CD8-positive, alpha-beta T cell (primary cell): ENCODE measurements at regions of chr3 and their contacts with region 1.

Region 1: GRCh38 chr3:152183473-152183872 is 85.3 kb upstream of the MBNL1 start:
- DNase-seq: peak in 8 of 9 experiments; percentile 34 to 83 (median 62)
- ATAC-seq: peak; percentile 94
- H3K4me3 ChIP-seq: no peak overlapping the region
- H3K4me3 Mint-ChIP-seq: peak overlapping the region; percentile 40
- H3K27ac ChIP-seq: no peak overlapping the region
- H3K27ac Mint-ChIP-seq: peak overlapping the region; percentile 82
- H3K4me1 ChIP-seq: peaks cover 22% of the 10 kb centered on the region
- H3K4me1 Mint-ChIP-seq: peaks cover 58% of the 10 kb centered on the region
- H3K27me3 ChIP-seq: no peaks in the 10 kb centered on the region
- H3K27me3 Mint-ChIP-seq: no peaks in the 10 kb centered on the region
- CTCF ChIP-seq: peak; percentile 79

Region 2: GRCh38 chr3:152193673-152194267 is 10.3 kb after region 1 on chr3:
- CTCF ChIA-PET with region 1: interaction called, 10 read pairs
- POLR2A ChIA-PET with region 1: interaction called, 5 read pairs
- intact Hi-C with region 1: no loop called
- DNase-seq: peak in 4 of 9 experiments; percentile 20 to 82 (median 51)
- ATAC-seq: peak; percentile 65
- H3K4me3 ChIP-seq: peak overlapping the region; percentile 54 to 59
- H3K4me3 Mint-ChIP-seq: peak overlapping the region; percentile 83
- H3K27ac ChIP-seq: peak overlapping the region; percentile 62 to 80
- H3K27ac Mint-ChIP-seq: peak overlapping the region; percentile 90
- H3K4me1 ChIP-seq: peaks cover 65% of the 10 kb centered on the region
- H3K4me1 Mint-ChIP-seq: peaks cover 76% of the 10 kb centered on the region
- H3K27me3 ChIP-seq: no peaks in the 10 kb centered on the region
- H3K27me3 Mint-ChIP-seq: no peaks in the 10 kb centered on the region
- CTCF ChIP-seq: no peak

Region 3: DNA sequence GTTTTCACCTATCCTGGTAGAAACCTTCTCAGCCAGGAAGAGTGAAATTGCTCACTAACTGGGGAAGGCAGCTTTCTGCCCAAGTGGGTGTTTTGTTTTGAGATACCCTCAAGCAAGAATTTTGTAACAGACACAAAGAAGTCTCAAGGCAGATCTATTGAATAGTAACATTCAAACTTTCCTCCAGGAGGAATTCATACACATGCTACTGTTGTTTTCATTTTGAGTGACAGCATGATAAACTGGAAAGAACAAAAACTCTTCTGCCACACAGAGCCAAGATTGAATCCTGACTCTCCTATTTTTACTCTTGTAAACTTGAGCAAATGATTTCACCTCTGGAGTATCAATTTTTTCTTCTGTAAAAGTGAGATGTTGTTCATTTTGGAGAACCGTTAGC is 30.5 kb after region 1 on chr3:
- CTCF ChIA-PET with region 1: interaction called, 6 read pairs
- POLR2A ChIA-PET with region 1: no interaction called
- intact Hi-C with region 1: loop called in 1 of 2 experiments (anchors 2 kb)
- DNase-seq: no peak
- ATAC-seq: no peak
- H3K4me3 ChIP-seq: no peak overlapping the region
- H3K4me3 Mint-ChIP-seq: no peak overlapping the region
- H3K27ac ChIP-seq: no peak overlapping the region
- H3K27ac Mint-ChIP-seq: no peak overlapping the region
- H3K4me1 ChIP-seq: peaks cover 11% of the 10 kb centered on the region
- H3K4me1 Mint-ChIP-seq: peaks cover 45% of the 10 kb centered on the region
- H3K27me3 ChIP-seq: no peaks in the 10 kb centered on the region
- H3K27me3 Mint-ChIP-seq: no peaks in the 10 kb centered on the region
- CTCF ChIP-seq: no peak

Region 4: GRCh38 chr3:152268555-152269425 is 85.3 kb after region 1 on chr3 and contains the start of gene MBNL1:
- CTCF ChIA-PET with region 1: interaction called, 12 read pairs
- POLR2A ChIA-PET with region 1: interaction called, 21 read pairs
- intact Hi-C with region 1: loop called in 1 of 2 experiments (anchors 1 kb)
- DNase-seq: peak; percentile 67 to 95 (median 84)
- ATAC-seq: peak; percentile 54
- H3K4me3 ChIP-seq: peak within 1 kb of the TSS; percentile 92 to 94
- H3K4me3 Mint-ChIP-seq: peak within 1 kb of the TSS; percentile 96
- H3K27ac ChIP-seq: peak within 1 kb of the TSS; percentile 89 to 96
- H3K27ac Mint-ChIP-seq: peak within 1 kb of the TSS; percentile 95
- H3K4me1 ChIP-seq: peaks cover 50% of the 10 kb centered on the region
- H3K4me1 Mint-ChIP-seq: peaks cover 61% of the 10 kb centered on the region
- H3K27me3 ChIP-seq: no peaks in the 10 kb centered on the region
- H3K27me3 Mint-ChIP-seq: no peaks in the 10 kb centered on the region
- CTCF ChIP-seq: no peak
- total RNA-seq, gene MBNL1: 515 to 529 TPM

Region 5: GRCh38 chr3:152291649-152292066 is 108.2 kb after region 1 on chr3:
- CTCF ChIA-PET with region 1: interaction called, 5 read pairs
- POLR2A ChIA-PET with region 1: interaction called, 3 read pairs
- intact Hi-C with region 1: loop called in 1 of 2 experiments (anchors 5 kb)
- DNase-seq: peak in 2 of 9 experiments; percentile 39 to 55
- ATAC-seq: peak; percentile 47
- H3K4me3 ChIP-seq: peak overlapping the region in 1 of 2 experiments; percentile 9
- H3K4me3 Mint-ChIP-seq: peak overlapping the region; percentile 42
- H3K27ac ChIP-seq: peak overlapping the region; percentile 18 to 58
- H3K27ac Mint-ChIP-seq: peak overlapping the region; percentile 71
- H3K4me1 ChIP-seq: peaks cover 80% of the 10 kb centered on the region
- H3K4me1 Mint-ChIP-seq: peaks cover 84% of the 10 kb centered on the region
- H3K27me3 ChIP-seq: no peaks in the 10 kb centered on the region
- H3K27me3 Mint-ChIP-seq: no peaks in the 10 kb centered on the region
- CTCF ChIP-seq: no peak

Region 6: GRCh38 chr3:152331018-152331541 is 147.6 kb after region 1 on chr3:
- CTCF ChIA-PET with region 1: interaction called, 12 read pairs
- POLR2A ChIA-PET with region 1: no interaction called
- intact Hi-C with region 1: no loop called
- DNase-seq: no peak
- ATAC-seq: no peak
- H3K4me3 ChIP-seq: no peak overlapping the region
- H3K4me3 Mint-ChIP-seq: peak overlapping the region; percentile 6
- H3K27ac ChIP-seq: no peak overlapping the region
- H3K27ac Mint-ChIP-seq: peak overlapping the region; percentile 77
- H3K4me1 ChIP-seq: peaks cover 74% of the 10 kb centered on the region
- H3K4me1 Mint-ChIP-seq: peaks cover 88% of the 10 kb centered on the region
- H3K27me3 ChIP-seq: no peaks in the 10 kb centered on the region
- H3K27me3 Mint-ChIP-seq: no peaks in the 10 kb centered on the region
- CTCF ChIP-seq: no peak

Region 7: GRCh38 chr3:152471814-152472671 is 288.6 kb after region 1 on chr3:
- CTCF ChIA-PET with region 1: interaction called, 16 read pairs
- POLR2A ChIA-PET with region 1: no interaction called
- intact Hi-C with region 1: loop called in 1 of 2 experiments (anchors 1 kb)
- DNase-seq: peak; percentile 48 to 85 (median 70)
- ATAC-seq: peak; percentile 90
- H3K4me3 ChIP-seq: peak overlapping the region; percentile 40
- H3K4me3 Mint-ChIP-seq: peak overlapping the region; percentile 77
- H3K27ac ChIP-seq: peak overlapping the region; percentile 11 to 59
- H3K27ac Mint-ChIP-seq: peak overlapping the region; percentile 94
- H3K4me1 ChIP-seq: peaks cover 12% of the 10 kb centered on the region
- H3K4me1 Mint-ChIP-seq: peaks cover 15% of the 10 kb centered on the region
- H3K27me3 ChIP-seq: no peaks in the 10 kb centered on the region
- H3K27me3 Mint-ChIP-seq: no peaks in the 10 kb centered on the region
- CTCF ChIP-seq: peak; percentile 84